Activated T-helper 1 cell treated with anti-CD3 and anti-CD28 coated beads, Interleukin-12 subunit alpha, Interleukin-12 subunit beta, Interleukin-2, Interleukin-4 antibody, amounts not matched to agents 30 ng/mL and 10 ng/mL and 1 ng/mL, durations not matched to agents 14 hours and 24 hours and 36 hours (primary cell): ENCODE measurements at regions of chr12 and their contacts with region 1.

Region 1: DNA sequence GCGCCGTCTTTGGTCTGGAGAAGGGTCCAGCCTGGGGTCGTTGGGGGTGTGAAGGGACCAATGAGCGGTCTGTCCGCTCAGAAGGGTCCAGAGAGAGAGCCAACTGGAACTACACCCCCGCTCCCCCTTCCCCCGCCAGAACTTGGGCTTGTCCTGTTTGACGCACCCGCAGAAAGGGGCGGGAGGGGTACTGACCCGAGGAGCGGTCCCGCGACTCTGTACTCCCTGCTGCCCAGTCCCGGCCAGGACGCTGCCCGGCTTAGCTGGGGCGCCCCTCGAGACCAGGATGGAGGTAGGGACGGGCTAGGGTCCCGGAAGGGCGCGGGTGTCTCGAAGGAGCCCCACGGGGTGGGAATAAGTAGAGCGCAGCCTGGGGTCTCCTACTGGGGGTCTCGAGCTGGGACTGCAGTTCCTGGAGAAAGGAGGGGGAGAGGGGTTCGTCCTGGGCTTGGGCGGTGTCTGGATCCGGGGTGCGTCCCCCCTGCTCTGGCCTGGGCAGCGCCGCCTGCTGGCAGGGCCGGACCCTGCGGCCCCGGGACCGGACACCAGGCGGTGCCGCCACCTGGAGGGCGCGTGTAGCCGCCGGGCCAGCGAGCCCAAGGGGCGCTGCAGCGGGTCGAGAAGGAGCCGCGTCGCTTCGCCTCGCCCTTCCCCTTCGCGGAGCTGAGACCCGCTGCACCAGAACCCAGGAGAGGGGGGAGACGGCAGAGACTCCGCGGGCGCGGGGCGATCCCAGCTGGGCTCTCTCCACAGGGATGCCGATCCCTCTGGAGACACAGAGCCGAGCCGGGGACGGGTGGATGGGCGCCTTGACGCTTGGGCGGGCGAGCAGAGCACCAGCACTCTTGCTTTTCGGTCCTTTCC is 3.8 kb upstream of the CACNB3 start:
- DNase-seq: peak; percentile 78
- H3K4me3 Mint-ChIP-seq: peak overlapping the region; percentile 93
- H3K27ac Mint-ChIP-seq: peak overlapping the region; percentile 55
- H3K4me1 Mint-ChIP-seq: peaks cover 28% of the 10 kb centered on the region
- H3K27me3 Mint-ChIP-seq: peaks cover 8% of the 10 kb centered on the region

Region 2: DNA sequence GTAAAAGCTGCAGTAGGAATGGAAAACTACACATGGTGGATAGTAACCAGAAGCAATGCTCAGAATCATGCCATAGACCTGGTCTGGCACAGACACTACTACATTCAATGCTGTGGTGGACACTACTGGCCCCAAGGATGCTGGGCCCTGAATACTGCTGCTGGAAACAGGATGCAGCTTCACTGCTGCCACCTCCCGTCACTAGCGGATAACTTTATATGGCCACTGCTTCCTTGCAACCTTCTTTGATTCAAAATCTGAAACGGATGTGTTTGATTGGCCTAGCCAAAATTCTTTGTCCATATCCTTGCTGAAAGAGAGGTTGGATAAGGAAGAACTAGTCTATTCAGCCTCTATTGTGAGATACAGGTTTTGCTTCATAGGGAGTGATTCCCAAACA is 56.3 kb before region 1 on chr12:
- intact Hi-C with region 1: loop called (anchors 1 kb)
- DNase-seq: no peak
- H3K4me3 Mint-ChIP-seq: no peak overlapping the region
- H3K27ac Mint-ChIP-seq: no peak overlapping the region
- H3K4me1 Mint-ChIP-seq: no peaks in the 10 kb centered on the region
- H3K27me3 Mint-ChIP-seq: peaks cover 3% of the 10 kb centered on the region

Region 3: DNA sequence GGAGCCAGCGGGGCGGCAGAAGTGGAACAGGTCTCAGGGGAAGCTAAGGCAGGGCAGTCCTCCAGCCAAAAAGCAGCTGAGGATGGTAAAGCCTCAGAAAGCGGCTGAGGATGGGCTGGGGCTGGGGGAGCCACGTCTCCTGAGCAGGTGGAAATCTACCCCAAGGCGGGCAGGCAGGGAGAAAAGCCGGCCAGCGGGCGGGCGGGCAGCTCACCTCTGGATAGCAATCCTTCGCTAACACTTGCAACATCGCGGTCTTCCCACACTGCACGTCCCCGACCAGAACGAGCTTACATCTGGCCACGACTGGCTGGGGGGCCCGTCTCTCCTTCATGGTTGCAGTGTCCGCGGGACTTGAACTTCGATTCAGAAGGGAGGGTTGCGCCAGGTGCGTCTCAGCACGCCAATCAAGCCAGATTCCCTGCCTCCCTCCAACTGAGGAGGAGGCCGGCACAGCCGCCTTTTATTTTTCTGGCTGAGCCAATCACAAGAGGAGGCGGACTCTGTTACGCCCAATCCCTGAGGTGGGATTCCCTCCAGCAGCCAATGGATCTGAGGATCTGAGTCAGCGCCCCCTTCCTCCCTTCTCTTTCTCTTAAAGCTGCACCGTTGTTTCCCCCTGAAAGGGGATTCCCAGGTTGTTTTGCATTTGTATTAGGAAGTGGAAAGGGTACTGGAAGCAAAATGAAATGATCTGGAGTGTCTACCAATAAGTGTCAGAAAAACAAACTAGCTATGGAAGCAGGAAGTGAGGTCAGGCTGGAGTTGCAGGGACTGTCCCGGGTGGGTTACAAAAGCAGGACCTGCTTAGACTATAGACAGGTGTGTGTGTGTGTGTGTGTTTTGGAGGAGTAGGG is 51.2 kb after region 1 on chr12 and contains the start of gene RND1:
- intact Hi-C with region 1: loop called (anchors 1 kb)
- DNase-seq: peak; percentile 84
- H3K4me3 Mint-ChIP-seq: peak within 1 kb of the TSS; percentile 86
- H3K27ac Mint-ChIP-seq: peak within 1 kb of the TSS; percentile 83
- H3K4me1 Mint-ChIP-seq: peaks cover 28% of the 10 kb centered on the region
- H3K27me3 Mint-ChIP-seq: peaks cover 19% of the 10 kb centered on the region
- total RNA-seq, gene RND1: 7.9 and 9.3 TPM in 2 replicates

Region 4: GRCh38 chr12:48957141-48958048 is 142.9 kb after region 1 on chr12 and contains the start of gene ARF3:
- intact Hi-C with region 1: loop called (anchors 1 kb)
- DNase-seq: peak; percentile 91
- H3K4me3 Mint-ChIP-seq: peak within 1 kb of the TSS; percentile 94
- H3K27ac Mint-ChIP-seq: peak within 1 kb of the TSS; percentile 94
- H3K4me1 Mint-ChIP-seq: peaks cover 46% of the 10 kb centered on the region
- H3K27me3 Mint-ChIP-seq: peaks cover 33% of the 10 kb centered on the region
- total RNA-seq, gene ARF3: 116 and 117 TPM in 2 replicates